ENCODE measurements at regions of chr5 and their contacts with region 1.

Region 1: GRCh38 chr5:61673007-61673735 is 341.1 kb downstream of the ZSWIM6 start:
- DNase-seq: no peak
- ATAC-seq: peak; percentile 14
- H3K4me3 ChIP-seq: no peak overlapping the region
- H3K27ac ChIP-seq: no peak overlapping the region
- H3K4me1 ChIP-seq: peaks cover 4% of the 10 kb centered on the region
- H3K27me3 ChIP-seq: no peaks in the 10 kb centered on the region
- CTCF ChIP-seq: no peak

Region 2: DNA sequence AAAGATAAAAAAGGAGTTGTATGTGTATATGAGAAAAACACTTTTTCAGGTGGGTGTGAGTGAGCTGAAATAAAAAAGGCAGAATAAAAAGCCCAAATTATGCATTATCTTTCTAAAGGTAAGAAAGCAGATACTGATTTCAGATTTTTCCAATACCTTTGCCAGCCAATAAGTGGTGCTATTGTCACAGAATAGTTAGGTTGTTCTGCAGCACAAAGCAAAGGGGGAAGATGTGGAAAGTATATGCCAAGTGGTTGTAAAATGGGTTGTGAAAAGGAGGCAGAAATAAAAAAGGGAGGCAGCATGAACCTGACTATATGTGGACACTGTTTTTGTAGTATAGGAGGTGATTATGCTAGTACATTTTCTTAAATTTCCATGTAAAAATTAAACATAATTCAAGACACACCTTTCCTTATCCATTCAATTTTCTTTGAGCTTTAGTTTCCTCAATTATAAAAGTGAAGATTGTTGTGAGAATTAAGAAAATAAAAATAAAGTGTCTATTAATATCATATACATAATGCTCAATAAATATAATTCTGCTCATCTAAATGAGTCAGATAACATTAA is 617.7 kb before region 1 on chr5:
- intact Hi-C with region 1: loop called (anchors 10 kb)
- DNase-seq: no peak
- ATAC-seq: peak; percentile 78
- H3K4me3 ChIP-seq: no peak overlapping the region
- H3K27ac ChIP-seq: no peak overlapping the region
- H3K4me1 ChIP-seq: no peaks in the 10 kb centered on the region
- H3K27me3 ChIP-seq: no peaks in the 10 kb centered on the region
- CTCF ChIP-seq: peak; percentile 67

Region 3: DNA sequence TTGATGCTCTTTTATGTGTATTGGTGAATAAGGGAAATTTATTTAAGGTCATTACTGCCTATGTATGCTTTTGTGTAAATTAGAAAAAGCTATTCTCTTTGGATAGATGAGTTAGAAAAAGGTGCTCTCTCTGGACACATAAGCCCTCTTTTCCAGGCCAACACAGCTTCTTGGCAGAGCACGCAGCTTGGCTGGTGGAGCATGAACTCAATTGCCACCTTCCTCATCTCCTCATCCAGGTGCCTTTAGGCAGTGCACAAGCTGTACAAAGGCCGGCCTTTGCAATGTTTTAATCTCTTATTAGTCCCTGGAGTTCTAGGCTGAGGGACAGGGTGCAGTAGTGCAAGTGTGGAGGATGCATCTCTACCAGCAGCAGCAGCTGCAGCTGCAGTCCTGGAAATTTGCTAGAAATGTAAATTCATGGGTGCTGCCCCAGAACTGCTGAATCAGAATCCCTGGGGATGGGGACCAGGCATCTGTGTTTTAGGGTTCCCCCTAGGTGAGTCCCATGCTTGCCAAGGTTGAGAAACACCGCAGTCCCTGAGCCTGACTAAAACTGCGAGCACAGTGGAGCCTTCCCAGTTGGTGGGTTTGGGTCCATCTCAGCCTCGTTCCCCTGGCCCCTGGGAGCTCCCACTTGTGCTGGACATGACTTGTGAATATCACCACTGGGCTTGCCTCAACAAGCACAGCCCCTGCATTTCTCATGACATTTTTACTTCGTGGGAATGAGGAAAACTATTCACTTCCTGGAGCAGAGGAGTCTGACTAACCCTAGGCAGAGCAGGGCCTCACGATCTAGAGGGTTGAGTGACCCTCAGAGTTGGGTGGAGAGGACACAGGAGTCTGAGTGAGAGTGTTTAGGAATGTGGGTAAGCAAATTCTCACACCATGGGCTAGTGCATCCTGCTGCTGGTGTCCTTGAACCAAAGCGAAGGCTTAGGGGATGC is 68.8 kb before region 1 on chr5:
- intact Hi-C with region 1: no loop called
- DNase-seq: no peak
- ATAC-seq: no peak
- H3K4me3 ChIP-seq: no peak overlapping the region
- H3K27ac ChIP-seq: no peak overlapping the region
- H3K4me1 ChIP-seq: peaks cover 11% of the 10 kb centered on the region
- H3K27me3 ChIP-seq: no peaks in the 10 kb centered on the region
- CTCF ChIP-seq: no peak